ENCODE measurements at regions of chrX and their contacts with region 1.

Region 1: DNA sequence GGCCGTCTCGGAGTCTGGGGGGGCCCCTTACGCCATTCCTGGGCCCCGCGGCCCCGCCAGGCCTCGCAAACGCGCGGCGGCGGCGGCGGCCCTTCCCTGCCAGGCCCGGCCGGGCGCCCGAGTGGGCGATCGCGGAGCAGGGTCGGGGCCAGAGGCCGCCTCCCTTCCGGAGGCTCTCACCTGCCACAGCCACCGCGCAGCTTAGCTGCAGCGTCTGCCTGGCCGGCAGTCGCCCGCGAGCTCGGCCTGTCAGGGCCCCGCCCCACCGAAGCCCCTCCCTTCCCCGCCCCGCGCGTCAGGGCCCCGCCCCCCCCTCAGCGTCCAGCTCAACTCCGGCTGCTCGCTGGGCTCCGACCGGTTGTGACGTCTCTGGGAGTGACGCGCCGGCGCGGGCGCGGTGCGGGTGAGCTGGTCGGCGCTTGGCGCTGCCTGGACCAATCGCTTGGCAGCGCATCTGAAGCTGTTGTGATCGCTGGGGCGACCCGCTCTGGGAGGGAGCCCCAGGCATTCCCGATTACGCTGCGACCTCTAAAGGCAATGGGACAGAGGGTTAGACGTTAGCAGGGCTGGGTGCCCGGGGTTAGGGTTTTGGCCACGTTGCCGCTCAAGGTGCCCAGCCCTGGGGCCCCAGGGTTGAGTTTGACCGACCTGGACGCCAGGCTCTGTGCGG is at the start of gene SLC10A3:
- DNase-seq: peak; percentile 95
- ATAC-seq: peak; percentile 86
- H3K4me3 ChIP-seq: peak within 1 kb of the TSS; percentile 80
- H3K27ac ChIP-seq: peak within 1 kb of the TSS; percentile 73
- H3K4me1 ChIP-seq: peaks cover 17% of the 10 kb centered on the region
- H3K27me3 ChIP-seq: no peaks in the 10 kb centered on the region
- CTCF ChIP-seq: no peak; the same call in 1 of the 2 replicates
- total RNA-seq, gene SLC10A3: 42.1 and 50.6 TPM in 2 replicates

Region 2: GRCh38 chrX:154327038-154327820 is 163.3 kb before region 1 on chrX:
- CTCF ChIA-PET with region 1: no interaction called
- POLR2A ChIA-PET with region 1: no interaction called
- intact Hi-C with region 1: no loop called
- DNase-seq: no peak
- ATAC-seq: no peak
- H3K4me3 ChIP-seq: no peak overlapping the region
- H3K27ac ChIP-seq: no peak overlapping the region
- H3K4me1 ChIP-seq: no peaks in the 10 kb centered on the region
- H3K27me3 ChIP-seq: peaks cover 41% of the 10 kb centered on the region
- CTCF ChIP-seq: no peak

Region 3: DNA sequence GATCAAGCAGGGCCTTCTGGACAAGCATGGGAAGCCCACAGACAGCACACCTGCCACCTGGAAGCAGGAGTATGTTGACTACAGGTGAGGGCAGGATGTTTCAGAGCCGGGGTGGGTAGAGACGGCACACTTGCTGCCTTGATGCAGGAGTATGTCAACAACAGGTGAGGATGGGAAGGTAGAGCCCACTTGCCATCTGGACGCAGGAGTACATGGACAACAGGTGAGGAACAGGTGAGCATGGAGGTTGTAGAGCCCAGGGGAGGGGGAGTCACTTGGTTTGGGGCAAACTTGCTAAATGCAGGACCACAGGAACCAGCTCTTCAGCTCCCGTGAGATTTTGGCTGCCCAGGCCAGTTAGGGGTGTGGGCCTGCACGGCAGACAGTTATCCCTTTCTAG is 284.1 kb after region 1 on chrX:
- CTCF ChIA-PET with region 1: no interaction called
- POLR2A ChIA-PET with region 1: interaction called, 10 read pairs
- intact Hi-C with region 1: no loop called
- DNase-seq: no peak
- ATAC-seq: no peak
- H3K4me3 ChIP-seq: no peak overlapping the region
- H3K27ac ChIP-seq: no peak overlapping the region
- H3K4me1 ChIP-seq: no peaks in the 10 kb centered on the region
- H3K27me3 ChIP-seq: no peaks in the 10 kb centered on the region
- CTCF ChIP-seq: no peak